Activated CD4-positive, alpha-beta T cell treated with anti-CD3 and anti-CD28 coated beads, Interleukin-2, amount 10 ng/mL, durations not matched to agents 24 days and 14 days (primary cell): ENCODE measurements at regions of chr10 and their contacts with region 1.

Region 1: GRCh38 chr10:3623746-3624145 is 161.3 kb downstream of the KLF6 start:
- DNase-seq: no peak
- H3K4me3 Mint-ChIP-seq: no peak overlapping the region
- H3K27ac Mint-ChIP-seq: no peak overlapping the region
- H3K4me1 Mint-ChIP-seq: peaks cover 29% of the 10 kb centered on the region
- H3K27me3 Mint-ChIP-seq: peaks cover 3% of the 10 kb centered on the region

Region 2: DNA sequence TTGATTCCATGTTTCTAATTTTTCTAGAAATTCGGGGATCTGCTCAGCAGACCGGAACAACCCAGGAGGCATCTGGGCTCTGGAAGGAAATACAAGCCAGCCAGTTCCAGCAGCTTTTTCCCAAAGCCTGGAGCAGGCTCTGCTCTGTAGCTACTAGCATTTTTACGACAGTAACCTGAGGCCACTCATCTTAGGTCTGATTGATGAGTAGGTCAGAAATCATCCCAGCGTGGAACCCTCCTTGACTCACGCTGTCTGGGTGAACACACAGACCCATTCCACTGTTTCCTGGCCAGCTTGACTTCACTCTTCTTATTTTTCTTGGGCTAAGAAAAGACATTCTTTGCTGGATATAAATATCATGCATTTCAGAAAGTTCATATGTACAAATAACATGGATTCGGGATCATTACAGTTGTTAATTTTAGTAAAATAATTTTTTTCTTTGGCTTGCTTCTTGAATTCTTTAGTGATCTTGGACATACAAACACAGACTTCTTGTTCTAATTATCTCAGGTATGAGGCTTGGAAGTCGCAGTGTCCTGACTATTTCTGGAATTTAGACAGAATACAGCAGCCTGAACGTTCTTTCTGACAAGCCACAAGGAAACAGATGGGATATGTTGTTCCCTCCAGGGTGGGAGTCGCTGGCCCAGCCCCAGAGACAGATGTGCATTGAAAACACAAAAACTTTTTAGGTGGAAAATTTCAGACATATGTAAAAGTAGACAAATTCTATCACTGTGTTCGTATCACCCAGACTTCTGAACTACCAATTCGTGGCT is 396.6 kb before region 1 on chr10:
- intact Hi-C with region 1: loop called (anchors 5 kb)
- DNase-seq: no peak
- H3K4me3 Mint-ChIP-seq: peak overlapping the region; percentile 51
- H3K27ac Mint-ChIP-seq: no peak overlapping the region
- H3K4me1 Mint-ChIP-seq: peaks cover 17% of the 10 kb centered on the region
- H3K27me3 Mint-ChIP-seq: peaks cover 22% of the 10 kb centered on the region

Region 3: DNA sequence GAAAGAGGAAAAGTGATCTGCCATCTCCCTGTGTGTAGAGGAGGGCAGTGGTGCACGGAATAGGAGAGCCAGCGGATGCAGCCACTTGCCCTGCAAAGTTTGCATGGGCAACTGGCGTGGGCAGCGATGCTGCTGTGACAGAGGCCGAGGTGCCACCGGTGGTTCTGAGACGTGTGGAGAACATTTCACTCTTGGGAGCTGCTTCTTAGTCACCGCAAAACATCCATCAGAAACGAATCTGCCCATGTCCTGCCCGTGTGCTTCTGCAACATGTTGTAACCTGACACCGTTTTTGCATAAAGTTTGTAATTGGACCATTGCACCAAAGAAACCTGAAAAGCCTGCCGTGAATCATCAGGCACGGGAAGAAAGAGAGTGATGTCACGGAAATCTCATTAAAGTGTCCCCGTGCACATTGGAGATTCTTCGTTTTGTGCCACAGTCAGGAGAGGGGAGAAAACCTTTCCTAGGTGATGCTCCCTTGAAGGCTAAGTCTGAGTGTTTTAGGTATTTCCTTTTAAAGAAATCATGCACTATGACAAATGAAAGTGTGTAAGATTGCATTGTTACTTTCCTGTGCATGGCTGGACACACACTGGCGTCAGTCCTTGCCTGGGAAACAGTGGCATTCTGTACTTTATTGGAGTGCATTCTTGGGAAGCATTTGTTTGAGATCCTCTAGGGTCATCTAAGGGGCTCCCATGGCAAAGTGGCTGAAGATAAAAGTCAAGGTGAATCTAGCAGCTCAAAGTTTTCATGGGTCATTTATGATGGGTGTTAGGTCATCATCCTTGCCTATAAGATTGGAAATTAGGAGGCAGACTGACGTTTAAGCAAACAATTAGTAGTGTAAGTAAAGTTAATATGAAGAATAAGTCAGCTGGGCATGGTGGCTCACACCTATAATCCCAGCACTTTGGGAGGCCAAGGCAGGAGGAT is 141.3 kb before region 1 on chr10:
- intact Hi-C with region 1: no loop called
- DNase-seq: no peak
- H3K4me3 Mint-ChIP-seq: no peak overlapping the region
- H3K27ac Mint-ChIP-seq: peak overlapping the region; percentile 24
- H3K4me1 Mint-ChIP-seq: peaks cover 33% of the 10 kb centered on the region
- H3K27me3 Mint-ChIP-seq: peaks cover 11% of the 10 kb centered on the region

Region 4: DNA sequence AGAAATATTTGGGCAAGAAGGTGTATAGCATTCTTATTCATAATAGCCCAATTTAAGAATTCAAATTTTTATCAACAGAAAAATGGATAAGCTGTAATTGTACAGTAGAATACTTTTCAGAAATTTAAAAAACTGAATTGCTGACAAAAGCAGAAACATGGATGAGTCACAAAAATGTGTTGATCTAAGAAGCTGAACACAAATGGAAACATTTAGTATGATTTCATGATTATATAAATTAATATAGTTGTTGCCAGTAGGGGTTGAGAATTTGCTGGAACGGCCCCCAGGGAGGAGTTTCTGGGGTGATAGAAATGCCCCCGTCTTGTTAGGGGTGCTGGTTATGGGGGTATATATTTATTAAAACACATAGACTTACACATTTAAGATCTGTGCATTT is 17.9 kb before region 1 on chr10:
- intact Hi-C with region 1: loop called (anchors 1 kb)
- DNase-seq: no peak
- H3K4me3 Mint-ChIP-seq: no peak overlapping the region
- H3K27ac Mint-ChIP-seq: no peak overlapping the region
- H3K4me1 Mint-ChIP-seq: peaks cover 4% of the 10 kb centered on the region
- H3K27me3 Mint-ChIP-seq: peaks cover 16% of the 10 kb centered on the region

Region 5: GRCh38 chr10:3757638-3758490 is 134.1 kb after region 1 on chr10:
- intact Hi-C with region 1: loop called (anchors 1 kb)
- DNase-seq: peak; percentile 90
- H3K4me3 Mint-ChIP-seq: peak overlapping the region; percentile 82
- H3K27ac Mint-ChIP-seq: peak overlapping the region; percentile 100
- H3K4me1 Mint-ChIP-seq: peaks cover 71% of the 10 kb centered on the region
- H3K27me3 Mint-ChIP-seq: no peaks in the 10 kb centered on the region

Region 6: GRCh38 chr10:3873728-3874461 is 250.1 kb after region 1 on chr10:
- intact Hi-C with region 1: loop called (anchors 5 kb)
- DNase-seq: peak; percentile 81
- H3K4me3 Mint-ChIP-seq: peak overlapping the region; percentile 14
- H3K27ac Mint-ChIP-seq: peak overlapping the region; percentile 88
- H3K4me1 Mint-ChIP-seq: peaks cover 52% of the 10 kb centered on the region
- H3K27me3 Mint-ChIP-seq: no peaks in the 10 kb centered on the region

Region 7: DNA sequence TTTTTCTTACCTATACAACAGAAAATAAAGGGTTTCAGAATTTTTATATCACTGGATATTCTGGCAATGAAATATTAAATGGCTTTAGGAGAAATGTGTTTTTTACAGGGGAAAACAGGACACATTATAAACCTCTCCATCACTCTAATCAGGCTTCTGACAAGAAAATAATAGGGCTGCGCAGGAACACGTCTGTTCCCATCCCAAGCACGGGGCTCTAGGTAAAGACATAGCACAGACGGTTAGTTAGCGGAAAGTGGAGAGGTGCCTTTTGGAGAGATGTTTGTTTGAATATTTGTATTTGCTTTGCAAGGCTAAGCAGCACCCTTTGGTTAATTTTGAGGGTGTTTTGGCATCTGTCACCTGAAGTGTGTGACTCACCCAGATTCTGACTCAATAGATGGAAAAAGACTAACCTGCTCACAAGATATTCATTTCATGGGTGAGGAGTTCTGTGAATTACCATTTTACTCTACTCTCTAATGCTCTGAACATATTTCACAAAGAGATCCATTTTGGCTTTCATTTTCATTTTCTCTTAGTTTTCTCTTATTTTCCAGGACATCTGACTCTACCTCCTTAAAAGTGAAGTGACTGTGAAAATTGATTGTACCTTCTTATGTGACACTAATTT is 1027.8 kb after region 1 on chr10:
- intact Hi-C with region 1: loop called (anchors 1 kb)
- DNase-seq: peak; percentile 74
- H3K4me3 Mint-ChIP-seq: peak overlapping the region; percentile 75
- H3K27ac Mint-ChIP-seq: peak overlapping the region; percentile 92
- H3K4me1 Mint-ChIP-seq: peaks cover 32% of the 10 kb centered on the region
- H3K27me3 Mint-ChIP-seq: no peaks in the 10 kb centered on the region